Ascending aorta (tissue), 2 donors: ENCODE measurements at regions of chr5 and their contacts with region 1.

Region 1: GRCh38 chr5:59126708-59127573 is 544.1 kb downstream of the RAB3C start:
- DNase-seq: no peak
- H3K4me3 ChIP-seq: peak overlapping the region; percentile 45 to 60
- H3K27ac ChIP-seq: peak overlapping the region in 1 of 2 donors; percentile 16
- H3K4me1 ChIP-seq: peaks cover 0 to 13% of the 10 kb centered on the region in 2 donors
- H3K27me3 ChIP-seq: no peaks in the 10 kb centered on the region
- CTCF ChIP-seq: no peak

Region 2: GRCh38 chr5:58922461-58923171 is 204.3 kb before region 1 on chr5:
- intact Hi-C with region 1: loop called (anchors 10 kb)
- DNase-seq: peak; percentile 41 to 95
- H3K4me3 ChIP-seq: peak overlapping the region in 1 of 2 donors; percentile 47
- H3K27ac ChIP-seq: peak overlapping the region; percentile 94 to 97
- H3K4me1 ChIP-seq: peaks cover 15 to 59% of the 10 kb centered on the region in 2 donors
- H3K27me3 ChIP-seq: no peaks in the 10 kb centered on the region
- CTCF ChIP-seq: peak in 2 of 3 experiments; percentile 10 to 20

Region 3: DNA sequence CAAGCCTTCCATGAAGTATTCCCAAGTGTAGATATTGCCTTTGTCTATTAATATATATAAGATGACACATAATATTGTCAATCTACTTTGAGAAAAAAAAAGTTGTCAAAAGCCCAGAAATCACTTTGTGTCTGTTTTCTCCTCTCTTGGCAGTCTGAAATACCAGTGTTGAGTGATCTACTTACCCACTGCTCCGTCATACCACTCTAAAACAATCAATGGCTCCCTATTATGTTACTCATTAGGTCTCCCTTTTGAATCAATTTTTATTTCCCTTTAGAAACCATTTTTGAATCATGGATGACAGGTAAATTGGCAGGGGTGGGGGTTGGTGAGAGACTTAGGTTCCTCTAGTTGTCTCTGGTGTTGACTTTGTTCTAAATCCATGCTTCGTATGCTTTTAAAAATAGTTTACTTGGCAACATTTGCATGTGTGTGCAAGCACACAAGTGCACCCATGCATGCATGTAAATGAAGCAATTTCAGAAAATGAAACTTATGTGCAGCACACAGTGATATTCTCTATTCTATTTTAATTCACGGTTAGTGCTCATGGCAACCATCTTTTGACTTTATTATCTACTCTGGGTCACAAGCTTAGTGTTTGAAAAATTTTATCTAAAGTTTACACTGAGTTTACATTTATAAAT is 165.2 kb before region 1 on chr5:
- intact Hi-C with region 1: no loop called
- DNase-seq: no peak
- H3K4me3 ChIP-seq: no peak overlapping the region
- H3K27ac ChIP-seq: no peak overlapping the region
- H3K4me1 ChIP-seq: no peaks in the 10 kb centered on the region
- H3K27me3 ChIP-seq: no peaks in the 10 kb centered on the region
- CTCF ChIP-seq: no peak